CD8-positive, alpha-beta T cell (primary cell): ENCODE measurements at regions of chr12 and their contacts with region 1.

Region 1: GRCh38 chr12:92108651-92109050 is 37.0 kb downstream of the BTG1 start:
- DNase-seq: no peak
- ATAC-seq: no peak
- H3K4me3 ChIP-seq: no peak overlapping the region
- H3K4me3 Mint-ChIP-seq: peak overlapping the region; percentile 44
- H3K27ac ChIP-seq: no peak overlapping the region
- H3K27ac Mint-ChIP-seq: peak overlapping the region; percentile 89
- H3K4me1 ChIP-seq: peaks cover 85% of the 10 kb centered on the region
- H3K4me1 Mint-ChIP-seq: peaks cover 82% of the 10 kb centered on the region
- H3K27me3 ChIP-seq: no peaks in the 10 kb centered on the region
- H3K27me3 Mint-ChIP-seq: no peaks in the 10 kb centered on the region
- CTCF ChIP-seq: no peak

Region 2: GRCh38 chr12:91702843-91703425 is 405.7 kb before region 1 on chr12:
- CTCF ChIA-PET with region 1: no interaction called
- POLR2A ChIA-PET with region 1: no interaction called
- intact Hi-C with region 1: no loop called
- DNase-seq: no peak
- ATAC-seq: no peak
- H3K4me3 ChIP-seq: no peak overlapping the region
- H3K4me3 Mint-ChIP-seq: no peak overlapping the region
- H3K27ac ChIP-seq: no peak overlapping the region
- H3K27ac Mint-ChIP-seq: no peak overlapping the region
- H3K4me1 ChIP-seq: no peaks in the 10 kb centered on the region
- H3K4me1 Mint-ChIP-seq: no peaks in the 10 kb centered on the region
- H3K27me3 ChIP-seq: no peaks in the 10 kb centered on the region
- H3K27me3 Mint-ChIP-seq: no peaks in the 10 kb centered on the region
- CTCF ChIP-seq: no peak

Region 3: GRCh38 chr12:91985002-91985787 is 123.5 kb before region 1 on chr12:
- CTCF ChIA-PET with region 1: no interaction called
- POLR2A ChIA-PET with region 1: interaction called, 3 read pairs
- intact Hi-C with region 1: loop called in 1 of 2 experiments (anchors 5 kb)
- DNase-seq: peak in 4 of 9 experiments; percentile 20 to 48 (median 27)
- ATAC-seq: peak; percentile 62
- H3K4me3 ChIP-seq: no peak overlapping the region
- H3K4me3 Mint-ChIP-seq: peak overlapping the region; percentile 32
- H3K27ac ChIP-seq: no peak overlapping the region
- H3K27ac Mint-ChIP-seq: peak overlapping the region; percentile 78
- H3K4me1 ChIP-seq: peaks cover 20% of the 10 kb centered on the region
- H3K4me1 Mint-ChIP-seq: peaks cover 59% of the 10 kb centered on the region
- H3K27me3 ChIP-seq: no peaks in the 10 kb centered on the region
- H3K27me3 Mint-ChIP-seq: no peaks in the 10 kb centered on the region
- CTCF ChIP-seq: no peak

Region 4: DNA sequence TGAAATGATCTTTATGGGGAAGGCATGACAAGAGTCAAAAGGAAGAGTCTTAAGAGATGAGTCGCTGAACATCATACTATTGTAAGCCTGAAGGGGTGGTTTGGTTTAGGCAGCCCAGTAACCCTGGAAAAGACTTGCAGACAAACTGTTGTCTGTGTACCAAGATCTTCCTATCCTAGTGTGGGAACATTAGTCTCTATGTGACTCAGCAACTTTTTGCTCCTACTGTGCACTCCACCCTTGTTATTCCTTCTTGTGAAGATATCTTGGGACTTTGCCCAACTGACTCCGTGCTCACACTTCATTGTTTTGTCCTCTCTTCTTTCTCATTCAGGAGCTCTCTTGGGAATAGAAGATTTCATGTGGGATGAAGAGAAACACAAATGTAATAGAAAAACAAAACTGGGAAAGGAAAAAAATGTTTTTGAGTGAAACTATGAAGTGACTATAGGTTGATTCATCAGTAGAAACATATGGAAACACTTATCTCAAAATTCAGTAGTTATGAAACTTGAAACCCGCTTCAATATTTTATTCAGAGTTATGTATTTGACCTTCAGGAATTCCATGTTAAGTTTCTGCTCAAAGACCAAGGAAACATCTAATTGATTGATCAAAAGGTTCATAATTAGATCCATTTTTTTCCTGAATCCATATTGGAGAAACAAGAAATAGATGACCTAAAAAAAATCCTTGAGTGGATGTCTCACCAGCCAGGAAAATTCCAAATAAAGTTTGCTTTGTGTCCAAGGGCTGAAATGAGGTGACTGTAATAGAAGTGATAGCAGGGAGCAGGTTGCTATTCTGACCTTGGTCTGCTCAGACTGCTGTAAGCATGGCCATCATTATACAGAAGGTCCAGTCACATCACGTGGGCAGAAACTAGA is 30.2 kb before region 1 on chr12:
- CTCF ChIA-PET with region 1: no interaction called
- POLR2A ChIA-PET with region 1: interaction called, 3 read pairs
- intact Hi-C with region 1: loop called in 1 of 2 experiments (anchors 2 kb)
- DNase-seq: no peak
- ATAC-seq: no peak
- H3K4me3 ChIP-seq: no peak overlapping the region
- H3K4me3 Mint-ChIP-seq: no peak overlapping the region
- H3K27ac ChIP-seq: no peak overlapping the region
- H3K27ac Mint-ChIP-seq: peak overlapping the region; percentile 84
- H3K4me1 ChIP-seq: peaks cover 48% of the 10 kb centered on the region
- H3K4me1 Mint-ChIP-seq: peaks cover 68% of the 10 kb centered on the region
- H3K27me3 ChIP-seq: no peaks in the 10 kb centered on the region
- H3K27me3 Mint-ChIP-seq: no peaks in the 10 kb centered on the region
- CTCF ChIP-seq: no peak

Region 5: DNA sequence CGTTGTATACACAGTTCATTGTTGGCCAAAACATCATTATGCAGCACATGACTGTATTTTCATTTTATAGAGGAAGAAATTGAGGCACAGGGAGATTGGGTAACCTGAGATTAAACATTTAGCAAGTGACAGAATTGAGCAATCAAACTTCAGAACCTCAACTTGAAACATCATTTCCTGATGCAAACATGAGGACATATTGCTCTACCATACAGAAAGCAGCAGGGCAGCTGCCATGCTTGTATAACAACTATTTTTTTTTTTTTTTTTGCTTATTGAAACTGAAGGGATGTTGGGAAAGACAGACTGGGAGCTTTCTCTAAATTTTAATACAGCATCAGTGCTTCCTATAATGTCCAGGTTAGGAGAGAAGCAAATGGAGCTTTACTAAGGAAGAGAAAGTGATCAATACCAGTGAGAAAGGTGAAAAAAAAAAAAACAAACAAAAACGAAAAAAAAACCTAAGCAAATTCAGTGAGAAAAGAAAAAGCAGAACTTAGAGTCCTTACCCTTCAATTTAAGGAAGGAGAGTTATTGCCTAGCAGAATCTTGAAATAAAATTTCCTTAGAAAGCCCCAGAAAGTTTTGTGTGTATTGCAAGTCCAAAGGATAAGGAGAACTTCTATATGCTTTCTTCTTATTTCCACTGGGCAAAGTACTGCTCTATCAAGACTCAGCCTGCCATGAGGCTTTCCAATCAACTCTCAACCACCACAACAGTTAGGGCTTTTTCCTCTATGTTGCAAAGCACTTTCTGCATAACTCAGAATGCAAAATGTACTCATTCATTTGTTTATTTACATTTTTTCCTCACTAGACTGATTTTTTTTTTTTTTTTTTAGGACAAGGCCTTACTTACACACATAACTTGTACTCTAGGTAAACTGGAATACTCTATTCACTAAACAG is 15.4 kb after region 1 on chr12:
- CTCF ChIA-PET with region 1: no interaction called
- POLR2A ChIA-PET with region 1: interaction called, 6 read pairs
- intact Hi-C with region 1: loop called in 1 of 2 experiments (anchors 2 kb)
- DNase-seq: no peak
- ATAC-seq: no peak
- H3K4me3 ChIP-seq: no peak overlapping the region
- H3K4me3 Mint-ChIP-seq: peak overlapping the region; percentile 45
- H3K27ac ChIP-seq: no peak overlapping the region
- H3K27ac Mint-ChIP-seq: peak overlapping the region; percentile 61
- H3K4me1 ChIP-seq: peaks cover 47% of the 10 kb centered on the region
- H3K4me1 Mint-ChIP-seq: peaks cover 55% of the 10 kb centered on the region
- H3K27me3 ChIP-seq: no peaks in the 10 kb centered on the region
- H3K27me3 Mint-ChIP-seq: no peaks in the 10 kb centered on the region
- CTCF ChIP-seq: no peak

Region 6: DNA sequence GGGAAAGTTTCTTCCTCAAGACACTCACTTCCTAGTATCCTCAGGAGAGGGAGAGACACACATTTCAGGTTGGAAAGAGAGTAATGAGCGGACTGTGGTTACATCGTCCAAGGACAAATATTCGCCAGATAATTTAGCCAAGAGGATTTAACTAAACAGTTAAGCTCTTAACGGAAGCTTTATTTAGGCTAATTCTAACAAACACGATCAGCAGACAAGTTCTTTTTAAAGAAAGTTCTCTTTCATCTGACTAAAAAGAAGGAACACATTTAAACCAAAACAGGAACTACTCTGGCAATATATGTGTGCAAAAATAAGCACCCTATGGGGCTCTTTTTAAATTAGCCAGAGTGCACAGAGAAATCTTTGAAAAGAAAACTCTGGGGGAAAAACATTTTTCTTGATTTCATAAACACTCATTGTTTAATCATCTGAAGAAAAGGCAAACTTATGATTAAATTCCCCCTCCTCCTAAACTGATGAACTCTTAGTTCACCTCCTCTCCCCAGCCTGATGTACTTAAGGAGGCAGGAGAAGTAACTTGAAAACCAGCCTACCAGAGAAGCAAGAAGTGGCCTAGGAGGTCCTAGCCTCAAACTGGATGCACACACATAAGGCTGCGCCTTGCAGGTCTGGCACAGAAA is 50.3 kb after region 1 on chr12:
- CTCF ChIA-PET with region 1: no interaction called
- POLR2A ChIA-PET with region 1: no interaction called
- intact Hi-C with region 1: loop called in 1 of 2 experiments (anchors 1 kb)
- DNase-seq: peak in 1 of 9 experiments; percentile 44
- ATAC-seq: peak; percentile 57
- H3K4me3 ChIP-seq: no peak overlapping the region
- H3K4me3 Mint-ChIP-seq: peak overlapping the region; percentile 62
- H3K27ac ChIP-seq: peak overlapping the region; percentile 6 to 54
- H3K27ac Mint-ChIP-seq: peak overlapping the region; percentile 90
- H3K4me1 ChIP-seq: peaks cover 49% of the 10 kb centered on the region
- H3K4me1 Mint-ChIP-seq: peaks cover 69% of the 10 kb centered on the region
- H3K27me3 ChIP-seq: no peaks in the 10 kb centered on the region
- H3K27me3 Mint-ChIP-seq: no peaks in the 10 kb centered on the region
- CTCF ChIP-seq: no peak